Colonic mucosa (tissue), 4 donors: ENCODE measurements at regions of chr3 and their contacts with region 1.

Region 1: GRCh38 chr3:46276502-46277099 is 34.3 kb downstream of the CCR3 start:
- DNase-seq: peak; percentile 75
- H3K4me3 ChIP-seq: no peak overlapping the region
- H3K27ac ChIP-seq: no peak overlapping the region
- H3K4me1 ChIP-seq: no peaks in the 10 kb centered on the region
- H3K27me3 ChIP-seq: no peaks in the 10 kb centered on the region
- CTCF ChIP-seq: peak; percentile 66

Region 2: DNA sequence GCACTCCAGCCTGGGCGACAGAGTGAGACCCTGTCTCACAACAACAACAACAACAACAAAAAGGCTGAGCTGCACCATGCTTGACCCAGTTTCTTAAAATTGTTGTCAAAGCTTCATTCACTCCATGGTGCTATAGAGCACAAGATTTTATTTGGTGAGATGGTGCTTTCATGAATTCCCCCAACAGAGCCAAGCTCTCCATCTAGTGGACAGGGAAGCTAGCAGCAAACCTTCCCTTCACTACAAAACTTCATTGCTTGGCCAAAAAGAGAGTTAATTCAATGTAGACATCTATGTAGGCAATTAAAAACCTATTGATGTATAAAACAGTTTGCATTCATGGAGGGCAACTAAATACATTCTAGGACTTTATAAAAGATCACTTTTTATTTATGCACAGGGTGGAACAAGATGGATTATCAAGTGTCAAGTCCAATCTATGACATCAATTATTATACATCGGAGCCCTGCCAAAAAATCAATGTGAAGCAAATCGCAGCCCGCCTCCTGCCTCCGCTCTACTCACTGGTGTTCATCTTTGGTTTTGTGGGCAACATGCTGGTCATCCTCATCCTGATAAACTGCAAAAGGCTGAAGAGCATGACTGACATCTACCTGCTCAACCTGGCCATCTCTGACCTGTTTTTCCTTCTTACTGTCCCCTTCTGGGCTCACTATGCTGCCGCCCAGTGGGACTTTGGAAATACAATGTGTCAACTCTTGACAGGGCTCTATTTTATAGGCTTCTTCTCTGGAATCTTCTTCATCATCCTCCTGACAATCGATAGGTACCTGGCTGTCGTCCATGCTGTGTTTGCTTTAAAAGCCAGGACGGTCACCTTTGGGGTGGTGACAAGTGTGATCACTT is 96.1 kb after region 1 on chr3:
- intact Hi-C with region 1: loop called (anchors 5 kb)
- DNase-seq: no peak
- H3K4me3 ChIP-seq: no peak overlapping the region
- H3K27ac ChIP-seq: no peak overlapping the region
- H3K4me1 ChIP-seq: no peaks in the 10 kb centered on the region
- H3K27me3 ChIP-seq: no peaks in the 10 kb centered on the region
- CTCF ChIP-seq: peak; percentile 19